ENCODE measurements at regions of chr11 and their contacts with region 1.

Region 1: GRCh38 chr11:47282462-47282861 is 12.5 kb downstream of the MADD start:
- DNase-seq: no peak
- H3K4me3 ChIP-seq: no peak overlapping the region
- H3K27ac ChIP-seq: no peak overlapping the region
- H3K4me1 ChIP-seq: no peaks in the 10 kb centered on the region
- H3K27me3 ChIP-seq: no peaks in the 10 kb centered on the region

Region 2: DNA sequence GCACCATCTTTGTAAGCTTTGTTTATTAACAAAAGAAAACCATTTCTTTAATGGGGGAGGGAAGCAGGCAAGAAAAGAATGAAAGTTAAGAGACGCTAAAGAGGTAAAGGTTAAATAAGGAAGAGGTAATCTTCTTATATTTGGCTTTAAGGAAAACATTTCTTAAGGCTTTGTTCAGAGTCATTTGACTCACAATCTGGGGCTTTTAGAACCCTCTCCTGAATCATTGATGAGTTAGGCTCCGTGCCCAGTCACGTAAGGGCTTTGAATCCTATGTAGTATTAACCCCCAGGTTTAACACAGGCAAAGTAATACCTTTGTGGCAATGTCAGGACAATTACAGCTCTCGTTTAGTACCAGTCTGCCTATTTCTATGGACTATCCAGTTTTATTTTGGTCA is 13.6 kb after region 1 on chr11:
- CTCF ChIA-PET with region 1: interaction called, 10 read pairs
- POLR2A ChIA-PET with region 1: interaction called, 3 read pairs
- DNase-seq: no peak
- H3K4me3 ChIP-seq: no peak overlapping the region
- H3K27ac ChIP-seq: no peak overlapping the region
- H3K4me1 ChIP-seq: no peaks in the 10 kb centered on the region
- H3K27me3 ChIP-seq: no peaks in the 10 kb centered on the region

Measured in common myeloid progenitor, CD34-positive (primary cell).